ENCODE measurements at regions of chr22 and their contacts with region 1.

Region 1: DNA sequence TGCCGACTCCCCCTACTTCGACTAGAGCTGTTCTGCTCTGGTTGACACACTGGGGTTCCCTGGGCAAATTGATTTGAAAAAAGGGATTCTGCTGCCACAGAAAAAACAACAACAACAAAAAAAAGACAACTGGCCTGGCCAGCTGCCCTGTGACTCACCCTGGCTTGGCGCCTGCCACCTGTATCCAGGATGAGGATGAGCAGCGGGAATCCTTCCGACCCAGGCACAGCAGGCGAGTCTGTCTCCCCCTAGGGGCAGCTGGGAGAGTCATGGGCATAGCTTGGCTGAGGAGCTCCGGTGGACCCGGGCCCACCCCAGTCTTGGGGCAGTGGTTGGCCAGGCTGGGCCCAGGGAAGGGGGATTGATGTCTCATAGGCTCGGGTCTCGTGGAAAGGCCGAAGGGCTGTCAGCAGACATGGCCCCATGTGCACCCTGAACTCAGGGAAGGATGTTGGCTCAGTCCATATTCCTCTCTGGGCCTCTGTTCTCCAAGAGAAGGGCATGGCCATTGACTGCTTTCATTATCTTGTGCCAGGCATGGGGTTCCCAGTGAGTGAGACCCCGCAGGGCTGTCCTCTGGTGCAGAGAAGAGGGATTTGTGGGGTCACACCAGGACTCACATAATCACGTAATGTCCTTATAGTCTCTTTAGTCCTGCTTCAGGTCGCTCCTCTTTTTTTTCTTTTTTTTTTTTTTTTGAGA is 10.4 kb upstream of the SUN2 start:
- DNase-seq: no peak
- H3K4me3 ChIP-seq: no peak overlapping the region
- CTCF ChIP-seq: peak; percentile 92

Region 2: GRCh38 chr22:38422611-38423511 is 343.4 kb before region 1 on chr22:
- CTCF ChIA-PET with region 1: no interaction called
- POLR2A ChIA-PET with region 1: no interaction called
- DNase-seq: no peak
- H3K4me3 ChIP-seq: no peak overlapping the region
- CTCF ChIP-seq: no peak

Region 3: DNA sequence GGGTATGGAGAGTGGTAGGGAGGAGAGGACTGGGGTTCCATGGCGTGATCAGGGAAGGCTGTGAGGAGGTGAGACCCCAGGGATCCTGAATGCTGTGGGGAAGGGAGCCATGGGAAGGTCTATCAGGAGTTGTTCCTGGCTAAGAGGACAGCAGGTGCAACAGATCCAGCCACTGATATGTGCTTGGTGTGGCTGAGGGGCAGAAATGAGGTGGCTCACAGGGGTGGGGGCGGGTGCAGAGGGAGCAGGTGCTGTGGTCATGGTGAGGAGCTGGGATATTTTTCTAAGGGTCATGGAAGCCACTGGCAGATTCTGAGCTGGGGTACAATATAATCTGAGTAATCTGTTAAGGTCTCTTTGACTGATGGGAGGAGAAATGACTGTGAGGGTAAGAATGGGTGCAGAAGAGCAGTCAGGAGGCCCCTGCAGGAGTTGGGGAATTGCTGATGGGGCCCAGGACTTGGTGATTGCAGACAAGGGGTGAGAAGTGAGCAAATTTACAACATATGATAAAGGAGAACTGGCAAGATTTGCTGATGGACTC is 164.9 kb before region 1 on chr22:
- CTCF ChIA-PET with region 1: no interaction called
- POLR2A ChIA-PET with region 1: no interaction called
- DNase-seq: no peak
- H3K4me3 ChIP-seq: no peak overlapping the region
- CTCF ChIP-seq: no peak

Region 4: DNA sequence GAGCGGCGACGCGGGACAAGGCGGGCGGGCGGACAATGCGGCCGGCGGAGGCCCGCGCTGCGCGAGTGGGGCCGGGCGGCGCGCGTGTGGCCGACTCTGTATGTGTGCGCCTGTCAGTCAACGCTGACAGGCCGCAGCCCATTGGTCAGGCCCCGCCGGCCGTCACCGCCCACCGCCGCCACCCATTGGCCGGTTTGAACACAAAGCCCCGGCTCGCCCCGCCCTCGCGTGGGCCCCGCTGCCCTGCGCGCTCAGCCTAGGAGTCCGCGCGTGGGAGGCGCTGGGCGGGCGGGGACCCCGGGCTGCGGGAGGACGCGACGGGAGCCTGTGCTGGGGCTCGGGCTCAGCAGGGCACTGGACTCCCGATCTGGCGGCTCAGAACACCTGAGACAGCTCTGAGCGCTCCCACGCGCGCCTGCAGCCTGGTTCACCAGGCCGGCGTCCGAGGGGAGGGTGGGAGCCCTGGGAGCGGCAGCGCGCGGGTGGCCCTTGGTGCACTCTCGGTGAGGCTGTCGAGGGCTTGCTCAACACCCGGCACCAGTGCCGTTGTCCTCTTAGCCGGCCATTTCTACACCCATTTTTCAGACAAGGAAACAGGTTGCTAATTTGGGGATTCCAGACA is 10.2 kb before region 1 on chr22 and contains the start of gene SUN2:
- CTCF ChIA-PET with region 1: interaction called, 159 read pairs
- POLR2A ChIA-PET with region 1: no interaction called
- DNase-seq: no peak
- H3K4me3 ChIP-seq: peak within 1 kb of the TSS; percentile 67
- CTCF ChIP-seq: no peak

Region 5: DNA sequence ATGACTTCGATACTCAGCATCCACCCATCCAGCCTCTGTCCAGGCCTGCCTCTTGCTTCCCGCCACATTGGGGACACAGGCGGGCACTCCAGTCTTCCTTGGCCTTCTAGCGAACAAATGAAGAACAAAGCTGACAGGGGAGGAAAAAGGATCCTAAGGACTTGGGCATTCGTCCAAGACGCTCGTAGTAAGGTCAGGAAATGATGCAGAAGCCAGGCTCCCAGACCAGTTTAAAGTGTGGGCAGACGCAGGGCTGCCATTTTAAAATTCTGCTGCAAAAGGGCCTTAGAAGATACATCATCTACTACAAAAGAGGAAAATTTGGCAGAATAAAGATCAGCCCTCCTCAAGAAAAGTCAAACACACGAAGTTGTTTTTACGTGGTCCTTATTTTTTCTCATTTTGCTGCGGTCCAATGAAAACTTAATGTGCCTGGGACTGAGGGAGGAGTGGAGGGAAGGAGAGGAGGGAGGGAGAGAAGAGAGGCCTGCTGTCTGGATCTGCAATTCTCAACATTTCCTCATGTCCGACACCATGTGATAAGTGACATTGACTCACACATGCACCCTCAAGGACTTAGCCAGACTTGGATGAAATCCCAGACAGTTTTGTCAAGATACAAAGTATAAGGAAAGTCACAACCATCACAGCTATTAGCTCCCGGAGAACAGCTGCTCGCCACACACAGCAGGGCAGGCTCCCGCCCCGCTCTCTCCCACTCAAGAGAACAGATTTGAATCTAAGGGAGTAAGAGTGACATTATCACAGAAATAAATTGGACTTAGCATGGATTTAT is 22.0 kb after region 1 on chr22:
- CTCF ChIA-PET with region 1: interaction called, 137 read pairs
- POLR2A ChIA-PET with region 1: no interaction called
- DNase-seq: peak; percentile 77
- H3K4me3 ChIP-seq: no peak overlapping the region
- CTCF ChIP-seq: no peak

Region 6: DNA sequence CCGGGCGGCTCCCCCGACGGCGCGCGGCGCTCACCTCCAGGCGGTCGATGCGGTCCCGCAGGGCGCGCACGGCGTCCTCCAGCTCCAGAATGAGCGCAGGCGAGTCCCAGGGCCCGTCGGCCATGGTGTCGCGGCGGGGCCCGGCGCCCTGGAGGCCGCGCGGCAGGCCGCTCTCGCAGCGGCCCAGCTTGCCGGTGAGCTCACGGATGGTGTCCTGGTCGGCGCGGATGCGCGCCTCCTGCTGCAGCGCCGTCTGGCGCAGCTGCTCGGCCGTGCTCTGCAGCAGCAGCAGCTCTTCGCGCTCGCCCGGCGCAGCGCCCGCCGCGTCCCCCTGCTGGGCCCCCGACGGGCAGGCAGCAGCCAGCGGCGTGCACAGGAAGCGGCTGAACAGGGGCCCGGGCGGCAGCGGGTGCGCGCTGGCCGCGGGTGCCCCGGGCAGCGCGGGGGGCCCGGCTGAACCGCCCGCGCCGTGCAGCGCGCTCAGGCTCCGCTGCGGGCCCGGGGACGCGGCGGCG is 77.0 kb after region 1 on chr22:
- CTCF ChIA-PET with region 1: interaction called, 85 read pairs
- POLR2A ChIA-PET with region 1: interaction called, 5 read pairs
- DNase-seq: no peak
- H3K4me3 ChIP-seq: peak overlapping the region; percentile 46
- CTCF ChIP-seq: peak; percentile 54

Region 7: GRCh38 chr22:38973289-38974169 is 207.3 kb after region 1 on chr22:
- CTCF ChIA-PET with region 1: interaction called, 11 read pairs
- POLR2A ChIA-PET with region 1: no interaction called
- DNase-seq: no peak
- H3K4me3 ChIP-seq: no peak overlapping the region
- CTCF ChIP-seq: peak; percentile 75

Region 8: GRCh38 chr22:39003165-39003638 is 237.0 kb after region 1 on chr22:
- CTCF ChIA-PET with region 1: interaction called, 197 read pairs
- POLR2A ChIA-PET with region 1: no interaction called
- DNase-seq: peak; percentile 26
- H3K4me3 ChIP-seq: no peak overlapping the region
- CTCF ChIP-seq: peak; percentile 74